Mammary epithelial cell (primary cell): ENCODE measurements at regions of chr2 and their contacts with region 1.

Region 1: GRCh38 chr2:16325016-16325975 is 340.3 kb downstream of the CYRIA start:
- DNase-seq: no peak
- H3K4me3 ChIP-seq: no peak overlapping the region
- H3K27ac ChIP-seq: no peak overlapping the region
- H3K4me1 ChIP-seq: no peaks in the 10 kb centered on the region
- H3K27me3 ChIP-seq: no peaks in the 10 kb centered on the region
- CTCF ChIP-seq: no peak

Region 2: DNA sequence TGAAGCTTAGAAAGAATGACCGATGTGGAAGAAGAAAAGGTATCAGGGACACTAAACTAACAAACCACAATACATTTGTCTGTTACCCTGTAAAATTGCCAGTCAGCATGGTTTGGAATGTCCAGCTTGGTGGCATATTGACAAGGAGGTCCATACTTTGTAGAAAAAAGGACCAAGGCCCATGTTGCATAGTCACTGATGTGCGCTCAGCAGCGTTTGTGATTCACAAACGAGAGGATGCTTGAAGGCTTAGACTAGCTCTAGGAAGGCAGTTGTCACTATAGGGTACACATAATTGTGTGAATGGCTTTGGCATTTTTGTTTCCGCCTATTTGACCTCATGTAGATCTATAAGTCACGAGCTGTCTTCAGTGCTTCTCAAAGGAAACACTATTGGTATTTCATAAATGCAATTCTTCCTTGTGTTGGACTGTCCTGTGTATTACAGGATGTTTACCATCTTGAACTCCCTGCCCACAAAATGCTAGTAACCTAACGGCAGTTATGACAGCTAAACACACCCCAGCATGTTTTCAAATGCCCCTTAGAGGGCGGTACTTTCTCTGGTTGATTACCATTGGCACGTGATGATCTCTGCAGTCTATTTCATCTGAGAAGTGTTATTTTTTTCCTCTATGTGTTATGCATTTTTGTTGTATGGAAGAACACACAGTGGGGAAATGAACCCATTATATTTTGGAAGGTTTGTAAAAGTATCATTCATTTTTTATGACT is 36.1 kb after region 1 on chr2:
- CTCF ChIA-PET with region 1: no interaction called
- dilution Hi-C with region 1: loop called (anchors 5 kb)
- in situ Hi-C with region 1: no loop called
- intact Hi-C with region 1: no loop called
- DNase-seq: no peak
- H3K4me3 ChIP-seq: no peak overlapping the region
- H3K27ac ChIP-seq: no peak overlapping the region
- H3K4me1 ChIP-seq: no peaks in the 10 kb centered on the region
- H3K27me3 ChIP-seq: no peaks in the 10 kb centered on the region
- CTCF ChIP-seq: no peak